AG04450 (cell line): ENCODE measurements at regions of chr17 and their contacts with region 1.

Region 1: DNA sequence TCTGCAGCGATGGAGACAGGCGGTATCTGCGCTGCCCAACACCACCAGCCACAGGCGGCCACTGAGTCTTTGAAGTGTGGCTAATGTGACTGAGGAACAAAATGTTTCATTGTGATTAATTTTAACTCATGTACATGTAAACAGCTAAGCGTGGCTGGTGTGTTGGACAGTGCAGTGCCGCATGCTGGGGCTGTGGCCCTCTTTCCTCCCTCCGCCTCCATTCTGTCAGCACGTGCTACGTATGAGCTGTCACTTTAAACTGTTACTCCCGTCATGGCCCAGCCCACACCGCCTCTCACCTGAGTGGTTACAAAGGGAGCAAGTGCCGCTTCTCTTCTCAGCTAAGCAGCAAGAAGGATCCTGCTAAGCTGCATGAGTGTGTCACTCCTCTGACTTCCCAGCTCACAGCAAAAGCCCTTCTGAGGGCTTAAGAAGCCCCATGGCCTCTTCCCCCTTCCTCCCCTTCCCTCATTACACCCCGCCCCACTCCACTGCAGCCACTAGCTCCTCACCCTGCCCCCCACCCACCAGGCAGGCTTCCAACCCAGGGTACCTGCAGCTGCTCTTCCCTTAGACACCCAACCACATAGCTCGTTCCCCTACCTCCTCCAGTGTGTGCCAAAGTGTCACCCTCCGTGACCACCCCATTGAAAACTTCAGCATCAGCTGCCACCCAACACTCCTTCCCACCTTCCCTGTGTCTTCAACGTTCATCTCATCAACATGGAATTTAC is 15.0 kb downstream of the HASPIN start:
- DNase-seq: no peak
- H3K4me3 ChIP-seq: no peak overlapping the region
- H3K27ac ChIP-seq: no peak overlapping the region
- H3K27me3 ChIP-seq: no peaks in the 10 kb centered on the region
- CTCF ChIP-seq: no peak

Region 2: DNA sequence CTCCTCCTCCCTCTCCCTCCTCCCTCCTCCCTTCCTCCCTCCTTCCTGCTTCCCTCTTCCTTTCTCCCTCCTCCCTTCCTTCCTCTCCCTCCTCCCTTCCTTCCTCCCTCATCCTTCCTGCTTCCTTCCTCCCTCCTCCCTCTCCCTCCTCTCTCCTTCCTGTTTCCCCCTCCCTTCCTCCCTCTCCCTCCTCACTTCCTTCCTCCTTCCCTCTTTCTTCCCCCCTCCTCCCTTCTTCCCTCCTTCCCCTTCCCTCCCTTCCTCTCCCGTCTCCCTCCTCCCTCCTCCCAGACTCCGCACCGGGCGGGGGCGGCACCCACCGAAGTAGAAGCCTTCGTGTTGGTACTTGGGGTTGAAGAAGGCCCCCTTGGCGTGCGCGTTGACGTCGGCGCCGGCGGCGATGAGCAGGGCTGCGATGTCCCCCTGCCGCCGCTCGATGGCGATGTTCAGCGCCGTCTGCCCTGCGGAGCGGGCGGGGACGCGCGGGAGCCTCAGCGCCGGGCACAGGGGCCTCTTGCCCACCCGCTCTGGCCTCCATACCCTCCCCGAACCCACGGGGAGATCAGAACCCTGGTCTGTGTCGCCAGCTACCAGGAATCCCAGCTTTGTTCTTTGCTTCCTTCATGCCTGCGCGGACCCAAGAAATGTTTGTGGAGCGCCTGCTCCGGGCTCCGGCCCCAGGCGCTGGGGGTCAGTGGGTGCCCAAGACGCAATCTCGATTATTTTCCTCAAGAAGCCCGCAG is 203.3 kb before region 1 on chr17:
- CTCF ChIA-PET with region 1: no interaction called
- POLR2A ChIA-PET with region 1: no interaction called
- DNase-seq: no peak
- H3K4me3 ChIP-seq: peak overlapping the region; percentile 47
- H3K27ac ChIP-seq: no peak overlapping the region
- H3K27me3 ChIP-seq: peaks cover 3% of the 10 kb centered on the region
- CTCF ChIP-seq: peak; percentile 64

Region 3: GRCh38 chr17:3575511-3575910 is 163.2 kb before region 1 on chr17:
- CTCF ChIA-PET with region 1: no interaction called
- POLR2A ChIA-PET with region 1: no interaction called
- DNase-seq: no peak
- H3K4me3 ChIP-seq: no peak overlapping the region
- H3K27ac ChIP-seq: no peak overlapping the region
- H3K27me3 ChIP-seq: no peaks in the 10 kb centered on the region
- CTCF ChIP-seq: no peak

Region 4: GRCh38 chr17:3723556-3724369 is 15.0 kb before region 1 on chr17 and contains the start of gene HASPIN:
- CTCF ChIA-PET with region 1: interaction called, 28 read pairs
- POLR2A ChIA-PET with region 1: interaction called, 4 read pairs
- DNase-seq: peak; percentile 62
- H3K4me3 ChIP-seq: peak within 1 kb of the TSS; percentile 94
- H3K27ac ChIP-seq: peak within 1 kb of the TSS; percentile 57
- H3K27me3 ChIP-seq: no peaks in the 10 kb centered on the region
- CTCF ChIP-seq: peak; percentile 34
- polyA plus RNA-seq, gene HASPIN: 1.3 and 1.6 TPM in 2 replicates

Region 5: GRCh38 chr17:3812771-3813170 is 74.0 kb after region 1 on chr17:
- CTCF ChIA-PET with region 1: interaction called, 18 read pairs
- POLR2A ChIA-PET with region 1: no interaction called
- DNase-seq: no peak
- H3K4me3 ChIP-seq: no peak overlapping the region
- H3K27ac ChIP-seq: no peak overlapping the region
- H3K27me3 ChIP-seq: no peaks in the 10 kb centered on the region
- CTCF ChIP-seq: no peak

Region 6: DNA sequence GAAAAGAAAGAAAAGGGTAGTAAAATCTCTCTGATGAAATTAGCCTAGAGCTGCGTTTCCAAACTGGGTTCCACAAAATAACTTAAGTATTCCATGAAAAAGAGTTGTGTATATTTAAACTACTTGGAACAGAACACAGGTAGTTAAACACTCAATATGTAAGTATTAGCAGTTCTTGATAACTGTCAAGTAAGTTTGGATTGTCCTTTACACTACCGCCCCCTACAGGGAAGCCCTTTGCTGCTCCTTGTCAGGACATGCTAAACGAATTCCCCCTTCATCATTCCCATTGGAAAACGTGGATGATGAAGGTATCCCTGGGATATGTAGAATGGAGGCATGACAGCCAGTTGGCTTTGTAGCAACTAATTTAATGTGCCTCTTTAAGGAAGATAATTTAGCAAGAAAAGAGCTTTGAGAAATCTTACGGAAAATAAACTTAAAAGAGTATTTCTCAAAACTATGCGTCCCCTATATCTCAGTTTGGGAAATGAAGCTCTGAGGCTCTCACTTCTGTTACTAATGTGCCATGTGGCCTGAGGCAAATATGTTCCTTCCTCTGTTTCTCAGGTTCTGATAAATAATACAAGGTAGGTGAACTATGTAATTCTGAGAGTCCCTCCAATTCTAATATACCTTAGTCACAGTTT is 88.5 kb after region 1 on chr17:
- CTCF ChIA-PET with region 1: interaction called, 116 read pairs
- POLR2A ChIA-PET with region 1: interaction called, 11 read pairs
- DNase-seq: no peak
- H3K4me3 ChIP-seq: no peak overlapping the region
- H3K27ac ChIP-seq: no peak overlapping the region
- H3K27me3 ChIP-seq: no peaks in the 10 kb centered on the region
- CTCF ChIP-seq: peak; percentile 68

Region 7: DNA sequence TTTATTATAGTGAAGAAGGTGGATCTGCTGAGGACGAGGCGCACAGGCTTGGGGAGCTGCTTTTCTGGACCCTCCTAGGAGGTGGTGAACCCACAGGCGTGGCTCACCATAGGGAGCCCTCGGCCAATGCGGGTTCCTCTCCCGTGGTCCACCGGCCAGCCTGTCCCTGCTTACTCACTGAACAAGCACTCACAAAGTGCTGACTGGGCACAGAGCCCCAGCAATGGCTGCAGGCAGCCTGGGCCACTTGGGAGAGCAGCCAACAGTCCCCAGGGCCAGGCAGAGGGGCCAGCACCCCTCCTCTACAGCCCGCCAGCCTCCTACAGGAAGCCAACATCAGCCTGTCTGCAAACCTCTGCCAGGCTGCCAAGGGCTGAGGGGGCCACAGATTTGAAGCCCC is 126.4 kb after region 1 on chr17:
- CTCF ChIA-PET with region 1: interaction called, 10 read pairs
- POLR2A ChIA-PET with region 1: no interaction called
- DNase-seq: no peak
- H3K4me3 ChIP-seq: no peak overlapping the region
- H3K27ac ChIP-seq: no peak overlapping the region
- H3K27me3 ChIP-seq: no peaks in the 10 kb centered on the region
- CTCF ChIP-seq: no peak

Region 8: GRCh38 chr17:4032738-4033137 is 294.0 kb after region 1 on chr17:
- CTCF ChIA-PET with region 1: no interaction called
- POLR2A ChIA-PET with region 1: no interaction called
- DNase-seq: no peak
- H3K4me3 ChIP-seq: no peak overlapping the region
- H3K27ac ChIP-seq: no peak overlapping the region
- H3K27me3 ChIP-seq: no peaks in the 10 kb centered on the region
- CTCF ChIP-seq: no peak